ENCODE measurements at regions of chr3 and their contacts with region 1.

Region 1: DNA sequence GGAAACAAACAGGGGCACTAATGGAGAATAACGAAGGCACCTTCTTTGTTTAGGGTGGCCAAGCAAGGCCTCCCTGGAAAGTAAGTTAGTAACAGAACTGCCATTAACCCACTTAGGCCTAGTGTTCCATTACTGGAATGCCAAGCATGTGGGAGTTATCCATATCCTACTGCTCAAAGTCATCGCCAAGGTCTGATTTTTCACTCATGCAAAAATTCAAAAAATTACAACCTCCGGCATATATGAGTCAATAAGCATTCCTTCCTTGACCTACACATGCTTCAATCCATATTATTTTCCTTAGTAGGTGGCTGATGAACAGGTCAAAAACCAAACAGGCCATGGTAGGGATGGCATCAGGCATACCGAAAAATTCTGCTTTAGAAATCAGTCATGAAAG is 1097.2 kb downstream of the FHIT start:
- DNase-seq: no peak
- ATAC-seq: no peak
- H3K4me3 Mint-ChIP-seq: no peak overlapping the region
- H3K27ac Mint-ChIP-seq: no peak overlapping the region
- H3K4me1 Mint-ChIP-seq: no peaks in the 10 kb centered on the region
- H3K27me3 Mint-ChIP-seq: no peaks in the 10 kb centered on the region
- CTCF ChIP-seq: no peak

Region 2: GRCh38 chr3:60238550-60238949 is 84.5 kb after region 1 on chr3:
- CTCF ChIA-PET with region 1: no interaction called
- POLR2A ChIA-PET with region 1: no interaction called
- intact Hi-C with region 1: loop called (anchors 10 kb)
- DNase-seq: no peak
- ATAC-seq: no peak
- H3K4me3 Mint-ChIP-seq: no peak overlapping the region
- H3K27ac Mint-ChIP-seq: no peak overlapping the region
- H3K4me1 Mint-ChIP-seq: no peaks in the 10 kb centered on the region
- H3K27me3 Mint-ChIP-seq: peaks cover 4% of the 10 kb centered on the region
- CTCF ChIP-seq: no peak